AG04449 (cell line): ENCODE measurements at regions of chr11 and their contacts with region 1.

Region 1: DNA sequence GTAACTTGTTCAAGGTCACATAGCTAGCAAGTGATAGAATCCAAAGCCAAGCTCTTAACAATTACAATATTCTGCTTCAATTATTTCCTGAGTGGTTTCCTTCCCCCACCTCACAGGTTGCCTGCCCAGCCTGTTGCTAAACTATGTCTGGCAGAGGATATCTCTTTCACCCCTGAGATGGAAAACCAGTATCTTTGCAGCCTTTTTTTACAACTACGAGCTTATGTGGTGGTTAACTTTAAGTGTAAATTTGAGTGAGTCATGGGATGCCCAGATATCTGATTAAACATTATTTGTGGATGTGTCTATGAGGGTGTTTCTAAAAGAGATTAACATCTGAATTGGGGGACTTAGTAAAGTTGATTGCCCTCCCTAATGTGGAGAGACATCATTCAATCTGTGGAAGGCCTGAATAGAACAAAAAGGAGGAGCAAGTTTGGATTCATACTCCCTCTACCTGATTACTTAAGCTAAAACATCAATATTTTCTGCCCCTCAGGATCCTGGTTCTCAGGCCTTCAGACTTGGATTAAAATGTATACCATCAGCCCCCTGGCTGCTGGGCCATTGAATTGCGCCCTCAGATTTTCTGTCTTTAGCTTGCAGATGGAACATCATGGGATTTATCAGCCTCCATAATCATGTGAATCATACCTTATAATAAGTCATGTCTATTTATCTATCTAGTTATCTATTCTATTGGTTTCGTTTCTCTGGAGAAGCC is 911.9 kb downstream of the METTL15 start:
- DNase-seq: no peak
- H3K4me3 ChIP-seq: no peak overlapping the region
- CTCF ChIP-seq: peak; percentile 47

Region 2: DNA sequence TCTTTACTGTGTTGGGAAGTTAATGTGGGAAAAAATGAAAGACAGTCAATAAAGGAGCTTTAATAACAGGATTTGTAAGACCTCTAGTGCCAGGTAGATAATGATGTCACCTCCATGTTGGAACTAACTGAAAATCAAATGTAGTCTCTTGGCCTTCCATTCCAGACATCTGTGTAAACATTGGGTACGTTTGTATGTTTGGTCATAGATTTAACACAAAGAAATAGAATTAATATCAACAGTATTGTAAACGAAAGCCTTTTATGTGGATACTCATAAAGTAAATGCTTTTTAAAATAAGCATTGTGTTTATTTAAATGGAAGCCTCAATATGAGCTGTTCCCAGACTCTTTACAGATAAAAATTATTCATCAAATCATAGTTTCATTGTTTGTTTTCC is 306.3 kb before region 1 on chr11:
- CTCF ChIA-PET with region 1: no interaction called
- POLR2A ChIA-PET with region 1: no interaction called
- DNase-seq: no peak
- H3K4me3 ChIP-seq: no peak overlapping the region
- CTCF ChIP-seq: no peak

Region 3: GRCh38 chr11:28999620-29000019 is 20.5 kb before region 1 on chr11:
- CTCF ChIA-PET with region 1: interaction called, 16 read pairs
- POLR2A ChIA-PET with region 1: no interaction called
- DNase-seq: no peak
- H3K4me3 ChIP-seq: no peak overlapping the region
- CTCF ChIP-seq: no peak

Region 4: DNA sequence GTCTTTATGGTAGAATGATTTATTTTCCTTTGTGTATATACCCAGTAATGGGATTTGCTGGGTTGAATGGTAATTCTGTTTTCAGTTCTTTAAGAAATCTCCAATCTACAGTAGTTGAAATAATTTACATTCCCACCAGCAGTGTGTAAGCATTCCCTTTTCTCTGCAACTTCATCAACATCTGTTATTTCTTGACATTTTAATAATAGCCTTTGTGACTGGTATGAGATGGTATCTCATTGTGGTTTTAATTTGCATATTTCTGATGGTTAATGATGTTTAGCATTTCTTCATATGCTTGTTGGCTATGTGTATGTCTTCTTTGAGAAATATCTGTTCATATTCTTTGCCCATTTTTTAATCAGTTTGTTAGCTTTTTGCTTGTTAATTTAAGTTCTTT is 10.7 kb before region 1 on chr11:
- CTCF ChIA-PET with region 1: interaction called, 21 read pairs
- POLR2A ChIA-PET with region 1: no interaction called
- DNase-seq: peak; percentile 21
- H3K4me3 ChIP-seq: no peak overlapping the region
- CTCF ChIP-seq: no peak